ENCODE measurements at regions of chr4 and their contacts with region 1.

Region 1: GRCh38 chr4:141158219-141158618 is 24.9 kb upstream of the RNF150 start:
- DNase-seq: peak; percentile 19 to 52 (median 40)
- ATAC-seq: peak; percentile 69
- H3K4me3 ChIP-seq: no peak overlapping the region
- H3K27ac ChIP-seq: no peak overlapping the region
- H3K4me1 ChIP-seq: peaks cover 0 to 2% of the 10 kb centered on the region in 2 experiments; a peak in 2 of 5 replicates
- H3K27me3 ChIP-seq: no peaks in the 10 kb centered on the region
- CTCF ChIP-seq: peak in 2 of 3 experiments; percentile 28 to 77; a peak in 3 of 6 replicates
- EP300 ChIP-seq: no peak
- POLR2A ChIP-seq: no peak
- RAD21 ChIP-seq: peak; percentile 57 to 71

Region 2: GRCh38 chr4:141294306-141294705 is 136.1 kb after region 1 on chr4:
- CTCF ChIA-PET with region 1: no interaction called
- POLR2A ChIA-PET with region 1: no interaction called
- in situ Hi-C with region 1: no loop called
- intact Hi-C with region 1: loop called (anchors 5 kb)
- DNase-seq: no peak
- ATAC-seq: no peak
- H3K4me3 ChIP-seq: no peak overlapping the region
- H3K27ac ChIP-seq: no peak overlapping the region
- H3K4me1 ChIP-seq: no peaks in the 10 kb centered on the region
- H3K27me3 ChIP-seq: no peaks in the 10 kb centered on the region
- CTCF ChIP-seq: no peak
- EP300 ChIP-seq: no peak
- POLR2A ChIP-seq: no peak
- RAD21 ChIP-seq: no peak

Region 3: GRCh38 chr4:142126890-142127497 is 968.8 kb after region 1 on chr4:
- CTCF ChIA-PET with region 1: no interaction called
- POLR2A ChIA-PET with region 1: no interaction called
- in situ Hi-C with region 1: no loop called
- intact Hi-C with region 1: loop called (anchors 5 kb)
- DNase-seq: peak; percentile 13 to 56 (median 32)
- ATAC-seq: peak; percentile 72
- H3K4me3 ChIP-seq: no peak overlapping the region
- H3K27ac ChIP-seq: no peak overlapping the region
- H3K4me1 ChIP-seq: no peaks in the 10 kb centered on the region
- H3K27me3 ChIP-seq: no peaks in the 10 kb centered on the region
- CTCF ChIP-seq: peak; percentile 49 to 65 (median 59); a peak in 5 of 6 replicates
- EP300 ChIP-seq: no peak
- POLR2A ChIP-seq: no peak
- RAD21 ChIP-seq: peak; percentile 59 to 69

Region 4: DNA sequence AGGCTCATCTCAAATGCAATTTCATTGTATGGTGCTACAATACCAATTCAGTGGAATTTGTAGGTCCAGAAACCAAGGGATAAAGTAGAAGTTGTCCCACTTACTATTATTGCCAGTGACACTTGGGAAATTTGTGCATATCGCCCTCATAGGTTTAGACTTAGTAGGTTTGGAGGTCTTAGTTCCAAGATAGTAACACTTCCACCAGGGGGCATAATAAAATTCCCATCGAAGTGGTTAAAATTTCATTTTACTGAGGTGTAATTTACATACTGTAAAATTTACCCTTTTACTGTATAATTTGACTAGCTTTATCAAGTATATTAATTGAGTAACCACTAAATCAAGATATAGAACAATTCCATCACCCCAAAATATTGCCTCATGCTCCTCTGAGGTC is 1513.3 kb after region 1 on chr4:
- CTCF ChIA-PET with region 1: no interaction called
- POLR2A ChIA-PET with region 1: no interaction called
- in situ Hi-C with region 1: no loop called
- intact Hi-C with region 1: no loop called
- DNase-seq: no peak
- ATAC-seq: no peak
- H3K4me3 ChIP-seq: no peak overlapping the region
- H3K27ac ChIP-seq: no peak overlapping the region
- H3K4me1 ChIP-seq: no peaks in the 10 kb centered on the region
- H3K27me3 ChIP-seq: no peaks in the 10 kb centered on the region
- CTCF ChIP-seq: no peak
- EP300 ChIP-seq: no peak
- POLR2A ChIP-seq: no peak
- RAD21 ChIP-seq: no peak

Region 5: GRCh38 chr4:142846729-142847596 is 1688.7 kb after region 1 on chr4:
- CTCF ChIA-PET with region 1: no interaction called
- POLR2A ChIA-PET with region 1: no interaction called
- in situ Hi-C with region 1: no loop called
- intact Hi-C with region 1: loop called (anchors 5 kb)
- DNase-seq: peak in 1 of 4 experiments; percentile 6
- ATAC-seq: peak; percentile 77
- H3K4me3 ChIP-seq: no peak overlapping the region
- H3K27ac ChIP-seq: no peak overlapping the region
- H3K4me1 ChIP-seq: peaks cover 0 to 6% of the 10 kb centered on the region in 2 experiments; a peak in 1 of 5 replicates
- H3K27me3 ChIP-seq: no peaks in the 10 kb centered on the region
- CTCF ChIP-seq: peak in 2 of 3 experiments; percentile 14 to 18; a peak in 2 of 6 replicates
- EP300 ChIP-seq: no peak
- POLR2A ChIP-seq: no peak
- RAD21 ChIP-seq: no peak

Measured in K562 (cell line).